ENCODE measurements at regions of chr20 and their contacts with region 1.

Region 1: GRCh38 chr20:62494980-62495748 is 19.4 kb upstream of the GATA5 start:
- DNase-seq: no peak
- H3K4me3 Mint-ChIP-seq: no peak overlapping the region
- H3K27ac Mint-ChIP-seq: no peak overlapping the region
- H3K4me1 Mint-ChIP-seq: peaks cover 2% of the 10 kb centered on the region
- H3K27me3 Mint-ChIP-seq: peaks cover 56% of the 10 kb centered on the region
- CTCF ChIP-seq: no peak

Region 2: GRCh38 chr20:62451156-62451767 is 43.9 kb before region 1 on chr20:
- CTCF ChIA-PET with region 1: interaction called, 13 read pairs
- intact Hi-C with region 1: no loop called
- DNase-seq: no peak
- H3K4me3 Mint-ChIP-seq: no peak overlapping the region
- H3K27ac Mint-ChIP-seq: no peak overlapping the region
- H3K4me1 Mint-ChIP-seq: no peaks in the 10 kb centered on the region
- H3K27me3 Mint-ChIP-seq: peaks cover 100% of the 10 kb centered on the region
- CTCF ChIP-seq: no peak

Region 3: GRCh38 chr20:62590301-62591121 is 95.3 kb after region 1 on chr20:
- CTCF ChIA-PET with region 1: no interaction called
- intact Hi-C with region 1: no loop called
- DNase-seq: peak; percentile 69
- H3K4me3 Mint-ChIP-seq: no peak overlapping the region
- H3K27ac Mint-ChIP-seq: no peak overlapping the region
- H3K4me1 Mint-ChIP-seq: peaks cover 9% of the 10 kb centered on the region
- H3K27me3 Mint-ChIP-seq: peaks cover 52% of the 10 kb centered on the region
- CTCF ChIP-seq: no peak